Psoas muscle (tissue), 8 donors: ENCODE measurements at regions of chr1 and their contacts with region 1.

Region 1: DNA sequence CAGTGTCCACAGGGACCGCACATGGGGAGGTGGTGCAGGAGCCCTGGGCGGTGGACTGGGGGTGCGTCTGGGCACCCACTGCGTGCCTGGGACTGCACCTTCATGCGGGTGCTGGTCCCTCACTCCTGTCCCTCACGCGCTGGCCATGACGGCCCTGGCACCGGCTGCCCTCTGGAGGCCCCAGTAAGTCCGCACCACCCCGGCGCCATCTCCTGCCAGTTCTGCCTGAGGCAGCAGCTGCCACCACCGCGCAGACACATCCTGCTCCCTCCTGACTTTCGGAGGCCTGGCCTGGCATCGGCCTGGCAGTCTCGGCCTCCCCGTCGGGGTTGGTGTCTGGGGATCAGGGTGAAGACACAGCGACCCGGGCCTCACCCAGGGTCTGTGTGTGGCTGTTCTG is 64.8 kb downstream of the MORN1 start:
- DNase-seq: no peak
- ATAC-seq: no peak
- H3K4me3 ChIP-seq: no peak overlapping the region
- H3K27ac ChIP-seq: no peak overlapping the region
- H3K4me1 ChIP-seq: peaks cover 19% of the 10 kb centered on the region
- H3K27me3 ChIP-seq: peaks cover 0 to 23% (median 0%) of the 10 kb centered on the region in 3 donors
- CTCF ChIP-seq: no peak

Region 2: DNA sequence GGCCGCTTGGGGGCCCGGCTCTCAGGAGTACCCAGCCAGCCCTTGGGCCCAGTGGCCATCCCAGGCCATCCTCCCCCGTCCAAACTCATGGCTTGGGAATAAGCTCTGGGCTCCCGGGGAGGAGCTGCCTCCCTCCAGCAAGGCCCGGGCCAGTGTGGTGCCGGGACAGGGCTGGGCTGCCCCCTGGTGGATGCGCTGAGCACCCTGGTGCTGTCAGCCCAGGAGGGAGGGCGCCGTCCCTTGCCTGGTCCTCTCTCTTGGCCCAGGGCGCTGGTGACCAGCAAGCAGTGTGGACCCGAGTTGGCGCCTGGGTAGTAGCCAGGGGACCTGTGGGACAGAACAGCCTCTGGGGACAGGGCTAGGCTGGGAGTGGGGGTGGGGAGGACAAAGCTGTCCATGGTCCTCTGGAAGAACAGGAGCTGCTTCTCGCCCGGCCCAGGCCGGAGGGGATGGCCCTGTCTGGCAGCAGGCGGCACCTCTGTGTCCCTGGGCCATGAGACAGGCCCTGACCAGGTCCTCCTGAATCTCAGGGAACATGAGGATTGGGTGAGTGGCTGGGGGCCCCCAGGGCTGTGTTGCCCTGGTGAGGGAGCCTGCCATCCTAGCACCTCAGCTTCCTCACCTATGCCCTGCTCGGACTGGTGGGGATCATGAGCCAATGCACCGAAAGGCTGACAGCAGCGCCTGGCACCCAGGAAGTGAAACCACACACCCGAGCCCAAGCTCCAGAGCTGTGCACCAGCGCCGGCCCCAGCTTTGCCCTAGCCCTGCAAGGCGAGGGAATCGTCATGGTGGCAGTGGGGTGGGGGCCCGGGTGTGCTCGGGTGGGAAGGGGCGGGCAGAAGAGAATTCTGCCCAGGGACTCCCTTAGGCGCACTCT is 55.5 kb after region 1 on chr1:
- intact Hi-C with region 1: loop called in 1 of 2 experiments (anchors 5 kb)
- DNase-seq: peak; percentile 82 to 92
- ATAC-seq: peak; percentile 91 to 98 (median 94)
- H3K4me3 ChIP-seq: no peak overlapping the region
- H3K27ac ChIP-seq: no peak overlapping the region
- H3K4me1 ChIP-seq: no peaks in the 10 kb centered on the region
- H3K27me3 ChIP-seq: no peaks in the 10 kb centered on the region
- CTCF ChIP-seq: peak; percentile 92

Region 3: GRCh38 chr1:2474933-2475371 is 148.4 kb after region 1 on chr1:
- intact Hi-C with region 1: no loop called
- DNase-seq: peak in 1 of 2 donors; percentile 62
- ATAC-seq: peak; percentile 46 to 79 (median 78)
- H3K4me3 ChIP-seq: no peak overlapping the region
- H3K27ac ChIP-seq: no peak overlapping the region
- H3K4me1 ChIP-seq: peaks cover 6% of the 10 kb centered on the region
- H3K27me3 ChIP-seq: peaks cover 0 to 15% (median 0%) of the 10 kb centered on the region in 3 donors
- CTCF ChIP-seq: no peak